ENCODE measurements at regions of chr7 and their contacts with region 1.

Region 1: GRCh38 chr7:31122649-31123058 is 70.5 kb downstream of the ADCYAP1R1 start:
- DNase-seq: peak in 4 of 5 donors; percentile 14 to 34 (median 21)
- H3K4me3 ChIP-seq: no peak overlapping the region
- H3K4me3 Mint-ChIP-seq: no peak overlapping the region
- H3K27ac ChIP-seq: no peak overlapping the region
- H3K27ac Mint-ChIP-seq: no peak overlapping the region
- H3K4me1 ChIP-seq: no peaks in the 10 kb centered on the region
- H3K4me1 Mint-ChIP-seq: no peaks in the 10 kb centered on the region
- H3K27me3 ChIP-seq: no peaks in the 10 kb centered on the region
- H3K27me3 Mint-ChIP-seq: peaks cover 0 to 16% of the 10 kb centered on the region in 2 donors

Region 2: GRCh38 chr7:30702200-30702599 is 420.5 kb before region 1 on chr7:
- CTCF ChIA-PET with region 1: no interaction called
- POLR2A ChIA-PET with region 1: no interaction called
- intact Hi-C with region 1: loop called (anchors 5 kb)
- DNase-seq: peak in 3 of 5 donors; percentile 25 to 44 (median 28)
- H3K4me3 ChIP-seq: no peak overlapping the region
- H3K4me3 Mint-ChIP-seq: no peak overlapping the region
- H3K27ac ChIP-seq: no peak overlapping the region
- H3K27ac Mint-ChIP-seq: peak overlapping the region in 1 of 7 donors; percentile 9
- H3K4me1 ChIP-seq: no peaks in the 10 kb centered on the region
- H3K4me1 Mint-ChIP-seq: peaks cover 7 to 15% (median 10%) of the 10 kb centered on the region in 4 donors
- H3K27me3 ChIP-seq: no peaks in the 10 kb centered on the region
- H3K27me3 Mint-ChIP-seq: no peaks in the 10 kb centered on the region

Region 3: GRCh38 chr7:31134246-31135188 is 11.9 kb after region 1 on chr7:
- CTCF ChIA-PET with region 1: interaction called, 117 read pairs
- POLR2A ChIA-PET with region 1: no interaction called
- intact Hi-C with region 1: no loop called
- DNase-seq: peak in 4 of 5 donors; percentile 18 to 39 (median 31)
- H3K4me3 ChIP-seq: no peak overlapping the region
- H3K4me3 Mint-ChIP-seq: peak overlapping the region in 1 of 8 donors; percentile 37
- H3K27ac ChIP-seq: no peak overlapping the region
- H3K27ac Mint-ChIP-seq: no peak overlapping the region
- H3K4me1 ChIP-seq: no peaks in the 10 kb centered on the region
- H3K4me1 Mint-ChIP-seq: peaks cover 3 to 9% (median 4%) of the 10 kb centered on the region in 4 donors
- H3K27me3 ChIP-seq: no peaks in the 10 kb centered on the region
- H3K27me3 Mint-ChIP-seq: peaks cover 0 to 5% of the 10 kb centered on the region in 2 donors